ENCODE measurements at regions of chr1 and their contacts with region 1.

Region 1: DNA sequence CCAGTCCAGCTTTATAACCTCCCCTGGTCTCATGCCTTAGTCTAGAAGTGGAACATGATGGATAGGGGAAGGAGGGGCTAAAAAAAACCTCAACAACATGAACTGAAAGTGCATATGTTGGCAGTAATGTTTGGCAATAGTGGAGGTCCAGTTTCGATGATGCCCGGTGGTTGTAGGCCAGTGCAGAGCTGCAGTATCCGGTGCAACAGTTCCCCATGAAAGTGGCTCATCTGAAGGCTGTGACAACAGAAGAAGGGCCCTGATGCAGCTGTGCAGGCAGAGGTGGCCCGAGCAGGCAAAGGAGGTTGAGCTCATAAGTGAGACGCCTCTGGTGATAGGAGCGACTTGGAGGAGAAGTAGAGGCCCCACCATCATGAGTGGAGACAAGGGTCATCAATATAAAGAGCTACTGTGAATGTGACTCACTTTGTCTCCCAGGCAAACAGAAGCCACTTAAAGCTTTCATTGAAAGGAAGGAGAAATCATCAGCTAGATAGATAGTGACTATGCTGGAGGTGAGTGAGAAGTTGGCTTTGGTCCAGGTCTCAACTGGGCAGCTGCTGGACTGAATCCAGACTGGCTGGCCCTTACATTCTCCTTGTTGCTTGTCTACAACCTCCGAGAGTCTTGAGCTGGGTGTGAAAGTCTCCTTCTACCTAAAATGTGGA is 10.2 kb upstream of the CREG1 start:
- DNase-seq: peak in 1 of 2 experiments; percentile 37
- H3K4me3 ChIP-seq: no peak overlapping the region
- H3K27ac ChIP-seq: peak overlapping the region; percentile 95
- H3K4me1 ChIP-seq: peaks cover 28% of the 10 kb centered on the region
- H3K27me3 ChIP-seq: no peaks in the 10 kb centered on the region
- CTCF ChIP-seq: no peak

Region 2: GRCh38 chr1:167587872-167588271 is 24.2 kb after region 1 on chr1:
- CTCF ChIA-PET with region 1: no interaction called
- POLR2A ChIA-PET with region 1: no interaction called
- intact Hi-C with region 1: no loop called
- DNase-seq: no peak
- H3K4me3 ChIP-seq: no peak overlapping the region
- H3K27ac ChIP-seq: no peak overlapping the region
- H3K4me1 ChIP-seq: no peaks in the 10 kb centered on the region
- H3K27me3 ChIP-seq: peaks cover 2% of the 10 kb centered on the region
- CTCF ChIP-seq: no peak

Region 3: GRCh38 chr1:167663002-167663772 is 99.5 kb after region 1 on chr1:
- CTCF ChIA-PET with region 1: no interaction called
- POLR2A ChIA-PET with region 1: no interaction called
- intact Hi-C with region 1: loop called (anchors 10 kb)
- DNase-seq: peak in 1 of 2 experiments; percentile 47
- H3K4me3 ChIP-seq: no peak overlapping the region
- H3K27ac ChIP-seq: no peak overlapping the region
- H3K4me1 ChIP-seq: peaks cover 19% of the 10 kb centered on the region; the same call in 1 of the 2 replicates
- H3K27me3 ChIP-seq: no peaks in the 10 kb centered on the region
- CTCF ChIP-seq: no peak